Activated T-helper 1 cell treated with anti-CD3 and anti-CD28 coated beads, Interleukin-12 subunit alpha, Interleukin-12 subunit beta, Interleukin-2, Interleukin-4 antibody, amounts not matched to agents 30 ng/mL and 10 ng/mL and 1 ng/mL, durations not matched to agents 14 hours and 24 hours and 36 hours (primary cell): ENCODE measurements at regions of chr5 and their contacts with region 1.

Region 1: DNA sequence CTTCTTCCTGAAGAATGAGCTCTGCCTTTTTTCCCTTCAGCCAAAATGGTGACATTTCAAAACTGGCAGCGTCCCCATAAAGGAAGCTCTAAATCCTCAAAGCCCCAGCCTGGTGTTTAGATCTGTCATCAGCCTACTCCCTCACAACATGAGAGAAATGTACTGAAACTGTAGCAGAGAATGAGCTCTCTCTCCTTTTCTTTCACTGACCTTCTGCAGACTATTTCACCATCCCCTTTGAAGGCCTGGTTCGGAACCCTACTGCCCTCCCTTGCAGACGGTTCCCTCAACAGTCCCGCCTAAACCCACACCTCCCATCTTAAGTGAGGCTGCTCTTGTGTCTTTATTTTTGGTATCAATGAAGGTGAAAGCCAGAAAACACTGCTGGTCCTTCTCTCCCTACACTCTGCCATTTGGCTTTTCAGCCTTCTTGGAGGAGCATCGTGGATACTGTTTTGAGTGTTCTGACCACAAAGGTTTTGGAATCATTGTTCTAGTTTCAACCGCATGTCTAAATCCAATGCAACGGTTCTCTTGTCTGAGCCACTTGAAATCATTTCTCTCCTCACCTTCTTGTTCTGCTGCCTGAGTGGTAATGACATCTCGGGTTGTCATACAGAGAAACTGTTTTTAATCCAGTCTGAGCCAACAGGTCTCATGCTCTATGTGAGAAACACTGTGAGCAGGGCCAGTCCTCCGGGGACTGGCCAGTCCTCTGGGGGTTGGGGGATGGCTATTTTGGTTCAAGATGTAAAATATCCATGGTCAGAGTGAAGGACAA is 39.0 kb downstream of the ITK start:
- DNase-seq: peak; percentile 43
- H3K4me3 Mint-ChIP-seq: peak overlapping the region; percentile 41
- H3K27ac Mint-ChIP-seq: peak overlapping the region; percentile 93
- H3K4me1 Mint-ChIP-seq: peaks cover 81% of the 10 kb centered on the region
- H3K27me3 Mint-ChIP-seq: no peaks in the 10 kb centered on the region

Region 2: GRCh38 chr5:157100140-157100679 is 119.5 kb before region 1 on chr5:
- intact Hi-C with region 1: loop called (anchors 1 kb)
- DNase-seq: no peak
- H3K4me3 Mint-ChIP-seq: peak overlapping the region; percentile 54
- H3K27ac Mint-ChIP-seq: peak overlapping the region; percentile 95
- H3K4me1 Mint-ChIP-seq: peaks cover 50% of the 10 kb centered on the region
- H3K27me3 Mint-ChIP-seq: no peaks in the 10 kb centered on the region

Region 3: DNA sequence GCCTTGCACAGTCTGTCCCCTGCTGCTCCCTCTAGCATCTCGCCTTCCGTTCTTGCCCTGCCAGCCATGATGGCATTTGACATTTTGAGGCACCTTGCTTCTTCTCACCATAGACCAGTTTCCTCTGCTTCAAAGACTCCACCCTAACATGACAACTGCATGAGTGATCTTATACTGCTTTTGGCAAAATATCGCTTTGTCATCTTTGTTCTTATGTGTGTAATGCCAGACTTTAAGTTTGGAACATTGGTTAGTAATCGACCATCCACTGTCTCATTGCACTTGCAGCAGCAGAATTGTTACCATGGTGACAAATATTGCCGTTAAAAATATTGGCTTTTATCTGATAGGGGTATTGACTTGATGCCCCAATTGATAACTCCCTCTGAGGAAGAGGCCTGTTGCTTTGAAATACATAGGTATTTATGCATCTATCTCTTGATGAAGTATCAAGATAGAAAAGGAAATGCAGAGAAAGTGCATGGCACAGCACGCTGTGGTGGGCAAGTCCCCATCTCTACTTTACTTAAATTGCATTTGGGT is 60.4 kb before region 1 on chr5:
- intact Hi-C with region 1: loop called (anchors 1 kb)
- DNase-seq: no peak
- H3K4me3 Mint-ChIP-seq: peak overlapping the region; percentile 49
- H3K27ac Mint-ChIP-seq: peak overlapping the region; percentile 86
- H3K4me1 Mint-ChIP-seq: peaks cover 64% of the 10 kb centered on the region
- H3K27me3 Mint-ChIP-seq: no peaks in the 10 kb centered on the region

Region 4: DNA sequence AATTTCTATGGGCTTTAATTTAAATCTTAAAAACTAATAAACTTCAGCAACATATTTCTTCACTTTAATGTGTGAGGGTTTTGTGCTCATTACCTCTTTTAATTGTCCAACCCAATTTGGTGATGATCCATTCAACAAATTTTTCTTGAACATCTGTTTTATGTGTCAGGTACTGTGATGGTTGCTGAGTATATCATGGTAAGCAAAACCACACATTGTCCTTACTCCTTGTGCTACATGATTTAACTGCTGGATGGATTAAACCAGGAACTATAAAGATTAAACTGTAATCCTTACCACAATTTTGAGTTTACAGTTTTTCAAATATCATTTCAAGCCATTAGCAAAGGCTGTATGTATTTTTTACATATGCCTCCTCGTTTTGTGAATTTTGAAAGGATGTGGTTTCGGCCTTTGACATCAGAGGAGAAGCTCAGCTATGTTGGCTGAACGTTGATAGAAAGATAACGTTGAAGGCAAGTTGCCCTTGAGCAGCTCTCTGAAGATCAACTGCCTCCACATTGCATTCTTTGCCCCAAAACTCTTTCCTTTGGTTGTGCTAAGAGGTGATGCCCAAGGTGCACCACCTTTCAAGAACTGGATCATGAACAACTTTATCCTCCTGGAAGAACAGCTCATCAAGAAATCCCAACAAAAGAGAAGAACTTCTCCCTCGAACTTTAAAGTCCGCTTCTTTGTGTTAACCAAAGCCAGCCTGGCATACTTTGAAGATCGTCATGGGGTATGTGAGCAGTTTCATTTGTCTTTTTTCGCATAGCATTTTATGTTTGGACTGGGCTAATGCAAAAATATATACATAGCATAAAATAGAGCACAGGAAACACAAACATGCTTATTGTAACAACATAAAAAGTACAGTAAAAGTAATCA is 39.1 kb before region 1 on chr5 and contains the start of gene ITK:
- intact Hi-C with region 1: loop called (anchors 1 kb)
- DNase-seq: peak; percentile 52
- H3K4me3 Mint-ChIP-seq: peak within 1 kb of the TSS; percentile 100
- H3K27ac Mint-ChIP-seq: peak within 1 kb of the TSS; percentile 100
- H3K4me1 Mint-ChIP-seq: peaks cover 57% of the 10 kb centered on the region
- H3K27me3 Mint-ChIP-seq: no peaks in the 10 kb centered on the region
- total RNA-seq, gene ITK: 251 and 259 TPM in 2 replicates

Region 5: GRCh38 chr5:157233515-157233914 is 13.8 kb after region 1 on chr5:
- intact Hi-C with region 1: loop called (anchors 2 kb)
- DNase-seq: no peak
- H3K4me3 Mint-ChIP-seq: no peak overlapping the region
- H3K27ac Mint-ChIP-seq: peak overlapping the region; percentile 46
- H3K4me1 Mint-ChIP-seq: peaks cover 37% of the 10 kb centered on the region
- H3K27me3 Mint-ChIP-seq: no peaks in the 10 kb centered on the region

Region 6: GRCh38 chr5:157253547-157253946 is 33.9 kb after region 1 on chr5:
- intact Hi-C with region 1: loop called (anchors 1 kb)
- DNase-seq: no peak
- H3K4me3 Mint-ChIP-seq: peak overlapping the region; percentile 68
- H3K27ac Mint-ChIP-seq: peak overlapping the region; percentile 97
- H3K4me1 Mint-ChIP-seq: peaks cover 93% of the 10 kb centered on the region
- H3K27me3 Mint-ChIP-seq: no peaks in the 10 kb centered on the region

Region 7: DNA sequence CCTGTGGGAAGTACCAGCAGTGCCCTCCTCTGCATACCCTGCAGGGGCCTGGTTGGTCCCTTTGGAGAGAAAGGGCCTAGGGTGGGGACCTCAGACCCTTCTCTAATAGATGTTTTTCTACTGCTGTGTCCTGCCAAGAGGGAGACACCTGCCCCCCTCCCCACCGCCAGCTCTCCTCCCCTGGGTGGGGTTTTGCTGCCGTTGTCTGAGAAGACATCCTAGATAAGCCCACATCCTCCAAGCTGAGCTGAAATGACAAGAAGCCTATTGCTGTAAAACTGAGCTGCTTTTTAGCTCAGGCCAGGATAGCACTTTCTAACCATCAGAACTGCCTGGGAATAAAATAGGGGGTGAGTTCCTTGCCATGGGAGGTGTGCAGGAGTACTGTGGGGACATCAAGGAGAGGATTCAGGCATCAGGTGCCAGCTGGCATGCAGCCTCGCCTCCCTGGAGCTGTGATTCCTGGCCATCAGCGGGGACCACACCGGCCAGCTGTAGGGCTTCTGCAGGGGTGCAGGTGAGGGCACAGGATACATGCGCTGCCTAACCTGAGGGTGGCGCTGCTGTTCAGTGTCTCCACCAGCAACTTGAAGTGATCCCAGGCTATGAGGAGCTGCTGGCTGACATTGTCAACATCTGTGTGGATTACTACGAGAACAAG is 84.1 kb after region 1 on chr5:
- intact Hi-C with region 1: no loop called
- DNase-seq: peak; percentile 34
- H3K4me3 Mint-ChIP-seq: peak overlapping the region; percentile 56
- H3K27ac Mint-ChIP-seq: peak overlapping the region; percentile 75
- H3K4me1 Mint-ChIP-seq: peaks cover 62% of the 10 kb centered on the region
- H3K27me3 Mint-ChIP-seq: no peaks in the 10 kb centered on the region

Region 8: GRCh38 chr5:157603333-157604190 is 383.9 kb after region 1 on chr5:
- intact Hi-C with region 1: loop called (anchors 2 kb)
- DNase-seq: peak; percentile 74
- H3K4me3 Mint-ChIP-seq: peak overlapping the region; percentile 59
- H3K27ac Mint-ChIP-seq: peak overlapping the region; percentile 88
- H3K4me1 Mint-ChIP-seq: peaks cover 79% of the 10 kb centered on the region
- H3K27me3 Mint-ChIP-seq: no peaks in the 10 kb centered on the region